Psoas muscle (tissue), 8 donors: ENCODE measurements at regions of chr9 and their contacts with region 1.

Region 1: DNA sequence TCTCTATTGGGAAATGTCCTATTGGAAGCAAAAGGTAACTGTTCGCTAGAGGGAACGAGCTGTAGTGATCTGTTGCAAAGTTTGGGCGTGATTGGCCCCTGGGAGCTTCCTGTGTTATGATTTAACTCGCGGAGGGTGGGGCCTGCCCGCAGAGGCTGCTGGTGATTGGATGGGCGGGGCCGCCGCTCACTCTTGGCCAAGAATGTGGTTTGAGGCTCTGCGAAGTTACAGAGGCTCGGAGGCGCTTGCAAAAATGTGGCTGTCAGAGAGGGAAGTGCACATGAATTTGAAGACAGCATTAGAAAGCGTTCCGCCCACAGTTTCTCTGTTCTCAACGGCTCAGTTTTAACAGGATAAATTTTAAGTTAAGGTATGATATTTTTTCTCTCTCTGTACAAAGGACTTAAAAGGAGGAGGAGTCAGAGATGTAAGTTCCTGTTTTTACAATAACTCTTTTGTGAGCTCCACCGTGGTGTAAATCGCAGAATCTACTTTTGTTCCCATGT is 46.9 kb downstream of the CNTRL start:
- DNase-seq: peak; percentile 98
- ATAC-seq: peak; percentile 100
- H3K4me3 ChIP-seq: peak overlapping the region; percentile 66
- H3K27ac ChIP-seq: peak overlapping the region; percentile 68
- H3K4me1 ChIP-seq: peaks cover 8% of the 10 kb centered on the region
- H3K27me3 ChIP-seq: no peaks in the 10 kb centered on the region
- CTCF ChIP-seq: peak; percentile 42

Region 2: GRCh38 chr9:121074635-121075385 is 46.8 kb before region 1 on chr9 and contains the start of gene CNTRL:
- intact Hi-C with region 1: loop called in 1 of 2 experiments (anchors 5 kb)
- DNase-seq: peak; percentile 91 to 92
- ATAC-seq: peak; percentile 90 to 91 (median 90)
- H3K4me3 ChIP-seq: peak within 1 kb of the TSS; percentile 89
- H3K27ac ChIP-seq: peak within 1 kb of the TSS; percentile 34
- H3K4me1 ChIP-seq: peaks cover 13% of the 10 kb centered on the region
- H3K27me3 ChIP-seq: peaks cover 0 to 23% (median 2%) of the 10 kb centered on the region in 3 donors
- CTCF ChIP-seq: no peak
- total RNA-seq, gene CNTRL: 1.3 to 2.4 (median 1.6) TPM

Region 3: GRCh38 chr9:121153642-121154041 is 32.0 kb after region 1 on chr9:
- intact Hi-C with region 1: no loop called
- DNase-seq: no peak
- ATAC-seq: no peak
- H3K4me3 ChIP-seq: no peak overlapping the region
- H3K27ac ChIP-seq: no peak overlapping the region
- H3K4me1 ChIP-seq: no peaks in the 10 kb centered on the region
- H3K27me3 ChIP-seq: no peaks in the 10 kb centered on the region
- CTCF ChIP-seq: no peak

Region 4: DNA sequence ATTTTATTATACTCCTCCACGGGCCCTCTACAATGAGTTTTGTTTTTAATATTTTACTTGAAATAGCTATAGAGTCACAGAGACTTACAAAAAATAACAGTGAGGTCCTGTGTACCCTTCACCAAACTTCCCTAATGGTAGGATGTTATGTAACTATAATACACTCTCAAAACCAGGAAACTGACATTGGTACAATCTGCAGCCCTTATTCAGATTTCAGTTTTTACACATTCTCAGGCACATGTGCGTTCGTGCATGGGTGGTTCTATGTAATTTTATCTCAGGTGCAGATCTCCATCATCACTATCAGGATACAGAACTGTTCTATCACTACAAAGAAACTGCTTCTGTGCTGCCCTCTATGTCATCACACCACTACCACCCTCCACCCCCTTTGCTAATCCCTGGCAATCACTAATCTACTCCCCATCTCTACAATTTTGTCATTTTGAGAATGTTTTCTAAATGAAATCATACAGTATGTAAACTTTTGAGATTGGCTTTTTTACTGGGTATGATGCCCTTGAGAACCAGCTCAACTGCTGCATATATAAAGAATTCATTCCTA is 63.6 kb after region 1 on chr9:
- intact Hi-C with region 1: no loop called
- DNase-seq: no peak
- ATAC-seq: no peak
- H3K4me3 ChIP-seq: no peak overlapping the region
- H3K27ac ChIP-seq: no peak overlapping the region
- H3K4me1 ChIP-seq: peaks cover 30% of the 10 kb centered on the region
- H3K27me3 ChIP-seq: no peaks in the 10 kb centered on the region
- CTCF ChIP-seq: no peak